Adrenal gland (tissue), 19 donors: ENCODE measurements at regions of chr6 and their contacts with region 1.

Region 1: GRCh38 chr6:47780510-47781356 is 1.1 kb upstream of the OPN5 start:
- DNase-seq: peak; percentile 16 to 64 (median 29)
- H3K4me3 ChIP-seq: no peak overlapping the region
- H3K27ac ChIP-seq: no peak overlapping the region
- H3K4me1 ChIP-seq: peaks cover 0 to 6% of the 10 kb centered on the region in 2 donors
- H3K27me3 ChIP-seq: no peaks in the 10 kb centered on the region
- CTCF ChIP-seq: peak; percentile 45 to 76 (median 65)
- POLR2A ChIP-seq: no peak

Region 2: DNA sequence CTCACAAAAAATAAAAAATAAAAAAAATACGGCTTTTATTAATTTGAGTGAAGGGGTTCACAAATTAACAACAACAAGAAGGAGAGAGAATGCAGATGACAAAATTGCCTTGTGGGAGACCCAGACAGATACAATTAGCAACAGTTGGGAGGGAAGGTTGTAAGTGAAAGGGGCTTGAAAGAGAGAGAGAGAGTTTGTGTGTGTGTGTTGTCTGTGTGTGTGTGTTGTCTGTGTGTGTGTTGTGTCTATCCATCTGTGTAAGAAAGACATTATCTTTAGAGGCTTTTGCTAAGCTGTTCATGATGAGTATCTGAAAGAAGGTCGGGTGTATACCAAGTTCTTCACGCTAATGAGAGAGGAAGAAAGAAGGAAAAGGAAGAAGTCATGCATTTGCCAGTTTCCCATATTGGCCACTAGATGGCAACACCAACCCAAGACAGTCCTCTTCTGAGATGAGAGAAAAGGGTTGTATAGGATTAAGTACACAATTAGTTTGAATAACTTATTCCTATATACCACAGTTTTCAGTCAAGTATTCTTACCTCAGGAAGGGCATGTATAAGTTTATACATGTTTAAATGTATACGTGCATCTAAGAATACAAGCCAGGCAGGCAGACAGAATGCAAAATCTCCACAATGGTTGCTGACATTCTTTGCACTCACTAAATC is 366.8 kb before region 1 on chr6:
- intact Hi-C with region 1: loop called in 1 of 2 experiments (anchors 5 kb)
- DNase-seq: peak; percentile 21 to 63 (median 32)
- H3K4me3 ChIP-seq: peak overlapping the region in 2 of 4 donors; percentile 5 to 66
- H3K27ac ChIP-seq: peak overlapping the region in 3 of 5 donors; percentile 16 to 49 (median 45)
- H3K4me1 ChIP-seq: peaks cover 0 to 9% of the 10 kb centered on the region in 2 donors
- H3K27me3 ChIP-seq: no peaks in the 10 kb centered on the region
- CTCF ChIP-seq: peak; percentile 75 to 92 (median 83)
- POLR2A ChIP-seq: no peak

Region 3: DNA sequence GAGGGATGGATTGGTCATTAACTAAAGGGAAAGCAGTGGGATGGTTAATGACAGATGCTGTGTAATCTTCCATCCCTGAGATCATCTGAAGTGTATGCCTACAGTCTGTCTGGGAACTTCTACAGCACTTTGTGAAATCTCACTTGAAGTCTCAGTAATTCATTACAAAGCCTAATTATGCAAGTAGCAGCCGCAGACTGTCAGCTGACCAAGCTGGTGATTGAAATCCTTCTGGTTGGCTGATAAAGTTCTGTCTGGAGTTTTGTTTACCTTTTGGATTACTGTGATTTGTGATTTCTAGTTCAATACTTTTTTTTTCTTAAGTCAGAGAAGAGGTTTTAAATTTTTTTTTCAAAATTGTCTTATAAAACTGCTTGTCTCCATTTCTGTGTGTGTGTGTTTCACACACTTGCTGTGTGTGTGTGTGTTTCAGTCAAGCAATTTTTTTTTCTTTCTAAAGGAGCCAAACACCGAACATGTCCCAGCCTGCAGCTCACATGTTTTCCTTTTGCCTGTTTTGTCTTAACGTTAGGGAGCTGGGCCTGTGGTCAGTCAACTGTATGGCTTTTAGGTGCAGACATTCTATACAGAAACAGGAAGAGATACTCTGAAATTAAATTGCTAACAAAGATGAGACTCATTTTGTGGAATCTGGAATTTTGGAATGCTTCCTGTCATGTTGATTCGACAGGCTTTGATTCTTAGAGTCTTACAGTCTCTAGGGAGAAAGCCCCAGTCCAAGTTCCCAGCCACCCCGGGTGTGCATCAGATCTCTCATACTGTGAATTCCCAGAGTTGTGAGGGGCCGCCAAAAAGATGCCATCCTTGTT is 110.8 kb before region 1 on chr6:
- intact Hi-C with region 1: no loop called
- DNase-seq: no peak
- H3K4me3 ChIP-seq: no peak overlapping the region
- H3K27ac ChIP-seq: no peak overlapping the region
- H3K4me1 ChIP-seq: no peaks in the 10 kb centered on the region
- H3K27me3 ChIP-seq: no peaks in the 10 kb centered on the region
- CTCF ChIP-seq: no peak
- POLR2A ChIP-seq: no peak